ENCODE measurements at regions of chr6 and their contacts with region 1.

Region 1: DNA sequence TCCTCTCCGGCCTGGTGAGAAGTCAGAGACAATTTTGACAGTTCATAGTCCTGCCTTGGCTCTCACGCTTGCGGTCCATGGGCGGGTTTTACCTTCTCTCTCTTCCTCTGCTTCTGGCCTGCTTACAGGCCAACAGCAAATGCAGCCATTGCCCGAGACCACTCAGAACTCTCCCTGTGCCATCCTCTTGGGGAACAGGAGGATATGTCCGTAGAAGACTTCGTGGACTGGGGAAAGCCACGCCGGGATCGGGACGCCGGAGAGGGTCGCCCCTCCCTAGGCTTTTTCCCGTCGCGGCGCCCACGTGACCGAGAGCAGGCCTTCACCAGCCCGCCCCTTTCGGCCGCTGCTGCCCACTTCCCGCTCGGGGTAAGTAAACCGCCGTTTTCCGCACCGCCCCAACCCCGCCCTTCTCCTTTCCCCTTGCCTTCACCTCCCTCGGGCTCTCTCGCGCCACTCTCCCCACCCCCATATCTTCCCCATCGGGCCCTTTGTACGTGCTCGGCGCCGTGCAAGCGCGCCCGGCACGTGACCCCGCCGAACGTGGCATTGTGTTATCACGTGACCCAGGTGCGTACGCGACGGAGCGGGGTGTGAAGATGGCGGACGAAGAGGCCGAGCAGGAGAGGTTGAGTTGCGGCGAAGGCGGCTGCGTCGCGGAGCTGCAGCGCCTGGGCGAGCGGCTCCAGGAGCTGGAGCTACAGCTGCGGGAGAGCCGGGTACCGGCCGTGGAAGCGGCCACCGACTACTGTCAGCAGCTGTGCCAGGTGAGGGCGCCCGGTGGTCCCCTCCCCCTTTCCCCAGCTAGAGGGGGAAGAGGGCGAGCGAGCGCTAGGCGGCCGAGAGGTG is at the start of gene ZNF292:
- DNase-seq: peak; percentile 98
- ATAC-seq: peak; percentile 95
- H3K4me3 ChIP-seq: peak within 1 kb of the TSS; percentile 54 to 71
- H3K27ac ChIP-seq: peak within 1 kb of the TSS; percentile 62 to 85
- H3K4me1 ChIP-seq: peaks cover 0 to 3% of the 10 kb centered on the region in 2 donors
- H3K27me3 ChIP-seq: no peaks in the 10 kb centered on the region
- total RNA-seq, gene ZNF292: 57.9 to 71.6 TPM

Region 2: DNA sequence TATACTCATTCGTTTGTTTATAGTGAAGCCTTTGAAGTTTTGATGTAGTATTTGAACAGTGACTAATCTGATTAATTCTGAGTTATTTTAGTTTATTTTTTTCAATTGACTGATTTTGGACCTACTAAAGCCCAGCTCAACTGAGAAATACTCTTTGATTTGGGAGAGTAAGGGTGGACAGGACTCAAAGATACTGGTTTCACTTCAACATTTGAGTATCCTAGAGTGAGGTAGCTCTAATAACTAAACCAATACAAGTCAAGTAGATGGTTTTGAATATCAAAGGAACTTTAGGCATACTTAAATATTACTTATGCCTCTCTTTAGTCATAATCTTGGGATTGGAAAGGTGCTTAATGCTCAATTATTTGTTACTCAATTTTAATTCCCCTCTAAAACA is 65.8 kb after region 1 on chr6:
- intact Hi-C with region 1: loop called in 1 of 2 experiments (anchors 10 kb)
- DNase-seq: no peak
- ATAC-seq: no peak
- H3K4me3 ChIP-seq: no peak overlapping the region
- H3K27ac ChIP-seq: no peak overlapping the region
- H3K4me1 ChIP-seq: no peaks in the 10 kb centered on the region
- H3K27me3 ChIP-seq: no peaks in the 10 kb centered on the region

Region 3: GRCh38 chr6:87322304-87323212 is 167.3 kb after region 1 on chr6 and contains the start of gene SMIM8:
- intact Hi-C with region 1: loop called (anchors 5 to 10 kb)
- DNase-seq: peak; percentile 88 to 94
- ATAC-seq: peak; percentile 100
- H3K4me3 ChIP-seq: peak within 1 kb of the TSS; percentile 70 to 94
- H3K27ac ChIP-seq: peak within 1 kb of the TSS in 1 of 2 donors; percentile 45
- H3K4me1 ChIP-seq: no peaks in the 10 kb centered on the region
- H3K27me3 ChIP-seq: no peaks in the 10 kb centered on the region
- total RNA-seq, gene SMIM8: 11.2 to 13.8 TPM

Region 4: GRCh38 chr6:87357479-87358196 is 202.4 kb after region 1 on chr6:
- intact Hi-C with region 1: no loop called
- DNase-seq: no peak
- ATAC-seq: no peak
- H3K4me3 ChIP-seq: no peak overlapping the region
- H3K27ac ChIP-seq: no peak overlapping the region
- H3K4me1 ChIP-seq: no peaks in the 10 kb centered on the region
- H3K27me3 ChIP-seq: no peaks in the 10 kb centered on the region

Region 5: GRCh38 chr6:87522686-87523085 is 367.5 kb after region 1 on chr6:
- intact Hi-C with region 1: no loop called
- DNase-seq: no peak
- ATAC-seq: no peak
- H3K4me3 ChIP-seq: no peak overlapping the region
- H3K27ac ChIP-seq: no peak overlapping the region
- H3K4me1 ChIP-seq: no peaks in the 10 kb centered on the region
- H3K27me3 ChIP-seq: no peaks in the 10 kb centered on the region

Measured in aorta (tissue), 5 donors.